HEK293 (cell line): ENCODE measurements at regions of chr11 and their contacts with region 1.

Region 1: DNA sequence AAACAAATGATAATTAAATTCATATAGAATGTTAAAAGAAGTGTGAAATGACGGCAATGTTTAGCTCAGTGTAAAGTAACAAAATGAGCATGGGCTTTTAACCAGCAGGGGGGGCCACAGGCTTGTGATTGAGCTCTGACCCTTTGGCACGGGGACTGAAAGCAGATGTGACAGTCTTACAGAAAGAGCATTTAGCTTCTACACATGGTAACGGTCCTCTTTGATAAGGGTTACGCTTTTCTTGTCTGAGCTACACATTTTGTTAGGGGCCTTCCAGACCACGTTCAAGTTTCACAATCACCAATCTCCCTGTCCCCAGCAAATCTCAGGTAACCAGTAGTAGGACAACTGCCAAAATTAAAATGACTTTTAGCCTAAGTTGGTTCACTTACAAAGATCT is 262.5 kb downstream of the DCDC1 start:
- H3K4me3 ChIP-seq: no peak overlapping the region
- H3K27ac ChIP-seq: no peak overlapping the region
- H3K4me1 ChIP-seq: no peaks in the 10 kb centered on the region
- CTCF ChIP-seq: peak; percentile 58; the same call in 1 of the 2 replicates

Region 2: DNA sequence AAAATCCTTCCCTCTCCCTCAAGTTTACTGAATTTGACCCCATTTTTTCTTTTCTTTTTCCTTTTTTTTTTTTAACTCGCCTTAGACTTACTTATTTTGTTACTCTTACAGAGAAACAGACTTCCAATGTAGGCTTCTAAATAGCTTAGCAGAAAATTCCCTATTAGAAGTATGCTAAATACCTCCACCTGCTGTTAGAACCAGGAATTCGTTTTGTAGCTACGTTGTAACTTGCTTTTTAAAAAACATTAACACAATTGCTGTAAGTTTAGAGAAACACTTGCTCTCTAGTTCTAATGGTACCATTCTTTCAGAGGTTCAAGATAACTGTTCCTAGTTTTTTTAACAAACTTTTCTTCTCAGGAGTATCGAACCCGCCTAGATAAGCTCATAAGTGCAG is 61.7 kb before region 1 on chr11:
- CTCF ChIA-PET with region 1: no interaction called
- POLR2A ChIA-PET with region 1: no interaction called
- H3K4me3 ChIP-seq: no peak overlapping the region
- H3K27ac ChIP-seq: no peak overlapping the region
- H3K4me1 ChIP-seq: no peaks in the 10 kb centered on the region
- CTCF ChIP-seq: no peak

Region 3: DNA sequence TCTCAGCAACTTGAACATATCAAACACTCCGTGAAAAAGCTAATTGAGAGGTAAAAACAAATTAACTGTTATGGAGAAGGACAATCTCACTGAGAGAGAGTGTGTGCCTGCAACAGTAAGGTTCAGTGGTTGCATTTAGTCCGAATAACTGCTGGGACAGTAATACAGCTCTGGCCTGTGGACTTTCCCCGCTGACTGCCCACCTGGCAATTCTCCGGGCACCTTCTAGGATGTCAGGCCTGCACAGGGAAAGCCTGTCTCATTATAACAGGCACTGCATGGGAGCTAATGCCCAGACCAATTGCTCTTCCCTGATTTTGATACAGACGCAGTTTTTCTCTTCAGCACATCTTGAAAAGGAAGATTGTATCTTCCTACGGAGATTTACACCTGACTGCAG is 11.5 kb after region 1 on chr11:
- CTCF ChIA-PET with region 1: interaction called, 20 read pairs
- POLR2A ChIA-PET with region 1: no interaction called
- H3K4me3 ChIP-seq: no peak overlapping the region
- H3K27ac ChIP-seq: no peak overlapping the region
- H3K4me1 ChIP-seq: no peaks in the 10 kb centered on the region; the same call in 1 of the 2 replicates
- CTCF ChIP-seq: no peak

Region 4: DNA sequence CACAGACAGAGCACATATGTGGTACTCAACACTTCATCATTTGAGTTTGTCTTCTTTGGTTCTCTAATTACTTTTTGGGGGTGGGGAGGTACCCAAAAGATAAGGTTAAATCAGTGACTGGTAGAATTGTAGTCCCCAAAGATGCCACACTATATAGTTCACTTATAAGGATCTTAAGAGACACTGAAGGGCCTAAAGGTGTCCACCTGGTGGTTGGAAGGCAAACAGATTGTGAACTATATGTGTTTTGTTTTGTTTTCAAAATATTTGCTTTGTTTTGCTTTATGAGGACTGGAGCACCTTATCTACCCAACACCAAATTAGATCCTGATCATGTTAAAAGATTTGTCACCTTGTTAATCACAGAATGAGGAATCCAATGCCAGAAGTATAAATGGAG is 126.4 kb after region 1 on chr11:
- CTCF ChIA-PET with region 1: interaction called, 59 read pairs
- POLR2A ChIA-PET with region 1: no interaction called
- H3K4me3 ChIP-seq: no peak overlapping the region
- H3K27ac ChIP-seq: no peak overlapping the region
- H3K4me1 ChIP-seq: no peaks in the 10 kb centered on the region
- CTCF ChIP-seq: no peak

Region 5: GRCh38 chr11:31240338-31240904 is 133.4 kb after region 1 on chr11:
- CTCF ChIA-PET with region 1: interaction called, 59 read pairs
- POLR2A ChIA-PET with region 1: no interaction called
- H3K4me3 ChIP-seq: no peak overlapping the region
- H3K27ac ChIP-seq: no peak overlapping the region
- H3K4me1 ChIP-seq: no peaks in the 10 kb centered on the region
- CTCF ChIP-seq: no peak

Region 6: DNA sequence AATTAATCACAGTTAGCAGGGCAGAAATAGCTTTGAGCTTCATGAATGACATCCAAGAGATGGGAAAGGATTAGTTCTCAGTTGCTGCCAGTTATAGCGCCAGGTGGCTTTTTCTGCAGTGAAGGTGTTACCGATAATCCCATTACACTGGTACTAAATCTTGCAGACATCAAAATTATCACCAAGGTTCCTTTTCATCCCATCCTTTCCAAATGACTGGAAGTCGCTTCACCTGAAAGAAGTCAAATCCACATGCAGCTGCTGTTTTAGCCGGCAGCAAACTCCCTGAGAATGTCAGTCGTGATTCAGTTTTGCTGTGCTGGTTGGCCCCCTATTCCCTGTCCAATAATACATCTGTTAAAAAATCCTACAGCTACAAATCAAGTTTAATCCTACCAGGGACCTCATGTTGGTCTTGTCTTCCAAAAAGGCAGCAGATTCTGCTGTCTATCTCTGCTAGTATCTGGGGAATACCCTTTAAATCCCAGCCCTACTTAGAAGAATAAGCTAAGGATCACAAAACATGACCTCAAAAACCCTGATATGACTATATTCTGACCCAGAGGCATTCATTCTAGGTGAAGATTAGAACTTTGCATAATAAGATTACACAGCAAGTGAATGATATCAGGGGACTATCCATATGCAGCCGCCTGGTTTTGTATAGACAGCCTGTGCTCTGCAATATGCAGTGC is 370.6 kb after region 1 on chr11:
- CTCF ChIA-PET with region 1: no interaction called
- POLR2A ChIA-PET with region 1: no interaction called
- H3K4me3 ChIP-seq: no peak overlapping the region
- H3K27ac ChIP-seq: no peak overlapping the region
- H3K4me1 ChIP-seq: no peaks in the 10 kb centered on the region
- CTCF ChIP-seq: no peak

Region 7: GRCh38 chr11:31870609-31871309 is 763.7 kb after region 1 on chr11:
- CTCF ChIA-PET with region 1: interaction called, 22 read pairs
- POLR2A ChIA-PET with region 1: no interaction called
- H3K4me3 ChIP-seq: peak overlapping the region; percentile 14
- H3K27ac ChIP-seq: no peak overlapping the region
- H3K4me1 ChIP-seq: 0 out of 2 replicates have a peak, but pooled peaks cover 3% of the 10 kb centered on the region
- CTCF ChIP-seq: 0 out of 2 replicates have a peak, but pooled peaks have one; percentile 9

Region 8: GRCh38 chr11:32006799-32007388 is 899.8 kb after region 1 on chr11:
- CTCF ChIA-PET with region 1: interaction called, 10 read pairs
- POLR2A ChIA-PET with region 1: no interaction called
- H3K4me3 ChIP-seq: no peak overlapping the region
- H3K27ac ChIP-seq: no peak overlapping the region
- H3K4me1 ChIP-seq: no peaks in the 10 kb centered on the region
- CTCF ChIP-seq: no peak